Right ventricle myocardium inferior (tissue), 1 donor: ENCODE measurements at regions of chr3 and their contacts with region 1.

Region 1: DNA sequence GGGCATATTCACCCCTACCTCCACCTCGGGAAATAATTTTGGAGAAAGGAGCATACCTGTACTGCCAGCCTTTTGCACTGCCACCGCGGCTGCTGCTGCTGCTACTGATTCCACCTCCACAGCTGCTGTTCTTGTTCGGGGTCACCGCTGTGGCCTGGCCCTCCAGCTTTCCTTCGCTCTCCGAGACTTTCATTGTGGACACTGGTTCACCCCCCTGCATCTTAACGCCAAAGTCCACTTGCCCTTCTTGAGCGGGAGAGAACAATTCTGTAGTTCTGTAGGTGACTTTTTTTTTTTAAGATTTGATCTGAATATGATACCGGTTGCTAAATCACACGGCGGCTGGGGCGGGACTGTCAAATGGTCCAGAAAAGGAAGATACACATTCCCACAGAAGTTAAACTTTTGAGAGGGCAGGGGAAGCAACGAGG is 701 bp downstream of the OSBPL11 start:
- DNase-seq: peak; percentile 72
- ATAC-seq: no peak

Region 2: GRCh38 chr3:125367403-125368230 is 227.0 kb before region 1 on chr3:
- intact Hi-C with region 1: no loop called
- DNase-seq: no peak
- ATAC-seq: no peak

Region 3: GRCh38 chr3:125622381-125622788 is 27.8 kb after region 1 on chr3:
- intact Hi-C with region 1: loop called (anchors 1 kb)
- DNase-seq: peak; percentile 76
- ATAC-seq: peak; percentile 96

Region 4: DNA sequence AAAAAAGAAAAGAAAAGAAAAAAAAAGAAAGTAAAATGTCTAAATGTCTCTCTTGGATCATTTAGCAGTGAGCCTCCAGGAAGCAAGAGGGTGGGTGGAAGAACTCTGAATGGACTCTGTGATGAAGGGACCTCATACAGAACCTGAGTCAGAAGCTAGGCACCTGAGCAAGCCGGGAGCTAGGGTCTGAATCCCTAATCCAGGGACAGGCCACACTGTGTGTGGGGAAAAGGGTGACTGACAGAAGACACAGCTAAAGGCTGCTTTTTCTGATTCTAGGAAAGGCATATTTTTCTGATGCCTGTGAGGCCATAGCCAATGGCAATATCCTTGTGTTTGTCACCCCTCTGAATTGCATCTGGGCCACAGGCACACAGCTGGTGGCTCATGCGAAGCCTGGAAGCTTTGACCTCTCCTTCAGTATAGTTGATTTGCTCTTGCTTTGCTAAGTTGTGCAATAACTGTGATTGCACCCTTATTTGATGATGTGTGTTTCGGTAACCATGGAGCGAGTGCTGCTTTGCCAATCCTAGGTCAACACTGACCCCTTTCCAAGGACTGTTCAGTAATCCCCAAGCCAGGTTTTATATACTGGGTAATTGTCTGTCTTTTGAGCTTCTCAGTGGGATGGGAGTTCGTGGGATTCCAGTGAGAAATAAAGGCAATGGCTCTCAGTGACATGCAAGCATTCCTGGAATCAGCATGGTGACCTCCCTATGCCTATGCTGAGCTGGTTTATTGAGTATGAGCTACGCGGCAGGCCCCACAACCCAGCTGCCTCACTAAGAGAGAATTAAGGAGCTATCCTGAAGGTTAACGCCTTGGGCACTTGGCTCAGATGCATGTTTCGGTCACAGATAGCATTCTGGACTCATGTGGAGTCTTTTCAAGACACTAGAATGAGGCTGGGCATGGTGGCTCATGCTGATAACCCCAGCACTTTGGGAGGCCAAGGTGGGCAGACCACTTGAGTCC is 49.7 kb after region 1 on chr3:
- intact Hi-C with region 1: loop called (anchors 2 kb)
- DNase-seq: peak; percentile 74
- ATAC-seq: peak; percentile 96

Region 5: DNA sequence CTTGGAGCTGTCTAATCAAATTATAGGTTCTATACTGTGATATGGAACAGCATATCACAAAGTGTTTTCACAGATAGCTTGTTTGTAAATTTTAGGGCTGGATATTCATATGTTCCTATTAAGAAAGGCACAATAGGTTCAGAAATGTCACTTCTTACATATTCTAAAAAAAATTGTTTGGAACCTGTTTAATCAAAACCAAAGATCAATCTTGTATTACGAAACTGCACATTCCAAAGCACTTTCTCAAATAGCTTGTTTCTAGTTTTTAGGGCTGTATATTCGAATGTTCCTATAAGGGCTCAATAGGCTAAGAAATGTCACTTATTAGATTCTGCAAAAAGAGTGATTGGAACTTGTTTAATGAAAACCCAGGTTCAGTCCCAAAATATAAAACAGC is 68.1 kb after region 1 on chr3:
- intact Hi-C with region 1: no loop called
- DNase-seq: no peak
- ATAC-seq: no peak